Endothelial cell of umbilical vein (primary cell): ENCODE measurements at regions of chr5 and their contacts with region 1.

Region 1: GRCh38 chr5:39217365-39218281 is 1.7 kb downstream of the FYB1 start:
- DNase-seq: peak; percentile 74
- H3K4me3 ChIP-seq: no peak overlapping the region
- H3K27ac ChIP-seq: no peak overlapping the region
- H3K4me1 ChIP-seq: no peaks in the 10 kb centered on the region
- H3K27me3 ChIP-seq: no peaks in the 10 kb centered on the region
- CTCF ChIP-seq: peak; percentile 85 to 90
- POLR2A ChIP-seq: no peak

Region 2: DNA sequence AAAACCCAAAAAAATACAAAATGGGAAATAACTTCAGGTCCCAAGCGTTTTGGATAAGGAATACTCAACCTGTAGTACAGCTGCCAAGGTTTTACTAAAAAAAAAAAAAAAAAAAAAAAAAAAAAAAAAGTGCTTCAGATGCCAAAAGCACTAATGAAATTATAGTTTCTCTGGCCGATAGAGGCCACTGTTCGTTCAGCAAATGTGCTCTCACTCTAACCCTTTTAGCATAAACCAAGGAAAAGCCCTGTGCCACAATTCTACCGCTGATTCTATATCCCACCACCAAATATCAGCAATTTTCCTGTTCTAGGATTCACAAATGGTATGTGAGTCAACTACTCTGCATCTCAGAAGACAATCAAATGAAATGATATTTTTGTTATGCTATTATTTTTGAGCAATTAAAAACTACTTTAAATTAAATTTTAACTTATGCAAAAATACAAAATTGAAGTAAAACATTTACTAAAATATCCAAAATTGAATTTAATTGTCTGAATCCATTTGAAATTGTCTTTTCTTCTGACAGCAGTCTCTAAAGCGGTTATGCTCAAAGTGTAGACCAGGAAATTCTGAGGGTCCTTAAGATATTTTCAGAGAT is 223.2 kb before region 1 on chr5:
- CTCF ChIA-PET with region 1: no interaction called
- POLR2A ChIA-PET with region 1: no interaction called
- dilution Hi-C with region 1: no loop called
- intact Hi-C with region 1: loop called (anchors 2 kb)
- DNase-seq: peak; percentile 76
- H3K4me3 ChIP-seq: no peak overlapping the region
- H3K27ac ChIP-seq: no peak overlapping the region
- H3K4me1 ChIP-seq: no peaks in the 10 kb centered on the region
- H3K27me3 ChIP-seq: no peaks in the 10 kb centered on the region
- CTCF ChIP-seq: peak; percentile 33 to 50
- POLR2A ChIP-seq: no peak

Region 3: GRCh38 chr5:39040875-39041274 is 176.7 kb before region 1 on chr5:
- CTCF ChIA-PET with region 1: no interaction called
- POLR2A ChIA-PET with region 1: no interaction called
- dilution Hi-C with region 1: no loop called
- intact Hi-C with region 1: no loop called
- DNase-seq: no peak
- H3K4me3 ChIP-seq: no peak overlapping the region
- H3K27ac ChIP-seq: no peak overlapping the region
- H3K4me1 ChIP-seq: no peaks in the 10 kb centered on the region
- H3K27me3 ChIP-seq: no peaks in the 10 kb centered on the region
- CTCF ChIP-seq: no peak
- POLR2A ChIP-seq: no peak

Region 4: GRCh38 chr5:39164529-39165402 is 52.9 kb before region 1 on chr5:
- CTCF ChIA-PET with region 1: interaction called, 13 read pairs
- POLR2A ChIA-PET with region 1: no interaction called
- dilution Hi-C with region 1: no loop called
- intact Hi-C with region 1: no loop called
- DNase-seq: no peak
- H3K4me3 ChIP-seq: no peak overlapping the region
- H3K27ac ChIP-seq: no peak overlapping the region
- H3K4me1 ChIP-seq: peaks cover 4% of the 10 kb centered on the region
- H3K27me3 ChIP-seq: no peaks in the 10 kb centered on the region
- CTCF ChIP-seq: no peak
- POLR2A ChIP-seq: no peak

Region 5: GRCh38 chr5:39231705-39232525 is 14.3 kb after region 1 on chr5:
- CTCF ChIA-PET with region 1: interaction called, 96 read pairs
- POLR2A ChIA-PET with region 1: no interaction called
- dilution Hi-C with region 1: no loop called
- intact Hi-C with region 1: no loop called
- DNase-seq: peak; percentile 84
- H3K4me3 ChIP-seq: no peak overlapping the region
- H3K27ac ChIP-seq: peak overlapping the region; percentile 45
- H3K4me1 ChIP-seq: peaks cover 13% of the 10 kb centered on the region
- H3K27me3 ChIP-seq: no peaks in the 10 kb centered on the region
- CTCF ChIP-seq: no peak
- POLR2A ChIP-seq: no peak

Region 6: DNA sequence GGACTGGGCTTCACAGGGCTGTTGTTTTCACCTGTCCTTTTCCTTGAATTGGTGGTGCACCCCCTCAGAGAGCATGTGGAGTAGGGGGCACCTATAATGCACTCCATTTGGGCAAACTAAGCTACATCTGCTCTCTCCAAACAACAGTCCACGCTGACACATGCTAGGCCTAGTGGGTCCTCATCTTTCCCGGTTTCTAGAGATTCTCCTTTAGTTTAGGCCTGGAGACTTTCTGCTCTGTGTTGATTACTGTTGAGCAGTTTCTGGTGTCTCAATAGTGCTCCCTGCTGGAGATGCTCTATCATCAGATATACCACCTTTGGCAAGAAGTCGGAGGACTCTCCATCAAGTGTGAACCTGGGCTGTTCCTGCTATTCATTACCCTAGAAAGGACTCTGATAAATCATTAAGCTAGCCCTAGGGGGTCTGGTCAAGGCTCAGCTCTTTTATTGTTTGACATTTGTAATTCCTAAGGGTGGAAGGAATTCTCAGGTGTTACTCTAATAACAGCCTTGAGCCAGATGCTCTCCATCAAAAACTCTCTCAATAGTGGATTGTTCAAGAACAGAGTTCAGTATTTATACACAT is 65.7 kb after region 1 on chr5:
- CTCF ChIA-PET with region 1: interaction called, 61 read pairs
- POLR2A ChIA-PET with region 1: no interaction called
- dilution Hi-C with region 1: no loop called
- intact Hi-C with region 1: loop called (anchors 1 kb)
- DNase-seq: peak; percentile 76
- H3K4me3 ChIP-seq: no peak overlapping the region
- H3K27ac ChIP-seq: no peak overlapping the region
- H3K4me1 ChIP-seq: no peaks in the 10 kb centered on the region
- H3K27me3 ChIP-seq: no peaks in the 10 kb centered on the region
- CTCF ChIP-seq: peak; percentile 50 to 67
- POLR2A ChIP-seq: no peak

Region 7: GRCh38 chr5:39370555-39371366 is 153.1 kb after region 1 on chr5:
- CTCF ChIA-PET with region 1: interaction called, 66 read pairs
- POLR2A ChIA-PET with region 1: interaction called, 3 read pairs
- dilution Hi-C with region 1: no loop called
- intact Hi-C with region 1: loop called (anchors 5 kb)
- DNase-seq: no peak
- H3K4me3 ChIP-seq: no peak overlapping the region
- H3K27ac ChIP-seq: no peak overlapping the region
- H3K4me1 ChIP-seq: no peaks in the 10 kb centered on the region
- H3K27me3 ChIP-seq: no peaks in the 10 kb centered on the region
- CTCF ChIP-seq: no peak
- POLR2A ChIP-seq: no peak

Region 8: GRCh38 chr5:39570403-39571027 is 352.9 kb after region 1 on chr5:
- CTCF ChIA-PET with region 1: interaction called, 27 read pairs
- POLR2A ChIA-PET with region 1: no interaction called
- dilution Hi-C with region 1: no loop called
- intact Hi-C with region 1: loop called (anchors 1 kb)
- DNase-seq: peak; percentile 61
- H3K4me3 ChIP-seq: no peak overlapping the region
- H3K27ac ChIP-seq: no peak overlapping the region
- H3K4me1 ChIP-seq: peaks cover 4% of the 10 kb centered on the region
- H3K27me3 ChIP-seq: no peaks in the 10 kb centered on the region
- CTCF ChIP-seq: peak; percentile 35 to 37
- POLR2A ChIP-seq: no peak